ENCODE measurements at regions of chr3 and their contacts with region 1.

Region 1: GRCh38 chr3:156040041-156040440 is 80.3 kb upstream of the KCNAB1 start:
- DNase-seq: no peak
- ATAC-seq: no peak
- H3K4me3 ChIP-seq: no peak overlapping the region
- H3K27ac ChIP-seq: no peak overlapping the region
- H3K4me1 ChIP-seq: peaks cover 0 to 9% of the 10 kb centered on the region in 2 experiments; a peak in 1 of 5 replicates
- H3K27me3 ChIP-seq: peaks cover under 1 to 16% of the 10 kb centered on the region in 2 experiments; a peak in 4 of 5 replicates
- CTCF ChIP-seq: no peak
- EP300 ChIP-seq: no peak
- POLR2A ChIP-seq: no peak
- RAD21 ChIP-seq: no peak

Region 2: GRCh38 chr3:155995525-155996351 is 44.3 kb before region 1 on chr3:
- CTCF ChIA-PET with region 1: no interaction called
- POLR2A ChIA-PET with region 1: no interaction called
- in situ Hi-C with region 1: no loop called
- intact Hi-C with region 1: loop called (anchors 5 kb)
- DNase-seq: peak; percentile 22 to 61 (median 42)
- ATAC-seq: peak; percentile 95
- H3K4me3 ChIP-seq: no peak overlapping the region
- H3K27ac ChIP-seq: no peak overlapping the region
- H3K4me1 ChIP-seq: no peaks in the 10 kb centered on the region
- H3K27me3 ChIP-seq: peaks cover 7 to 13% of the 10 kb centered on the region in 2 experiments; a peak in 3 of 5 replicates
- CTCF ChIP-seq: peak; percentile 44 to 82 (median 69); a peak in 5 of 6 replicates
- EP300 ChIP-seq: no peak
- POLR2A ChIP-seq: no peak
- RAD21 ChIP-seq: peak; percentile 71 to 83

Region 3: GRCh38 chr3:156098437-156099035 is 58.5 kb after region 1 on chr3:
- CTCF ChIA-PET with region 1: no interaction called
- POLR2A ChIA-PET with region 1: no interaction called
- in situ Hi-C with region 1: no loop called
- intact Hi-C with region 1: no loop called
- DNase-seq: no peak
- ATAC-seq: no peak
- H3K4me3 ChIP-seq: no peak overlapping the region
- H3K27ac ChIP-seq: no peak overlapping the region
- H3K4me1 ChIP-seq: peaks cover 0 to 6% of the 10 kb centered on the region in 2 experiments; a peak in 1 of 5 replicates
- H3K27me3 ChIP-seq: peaks cover 0 to 6% of the 10 kb centered on the region in 2 experiments; a peak in 3 of 5 replicates
- CTCF ChIP-seq: no peak
- EP300 ChIP-seq: no peak
- POLR2A ChIP-seq: no peak
- RAD21 ChIP-seq: no peak

Region 4: DNA sequence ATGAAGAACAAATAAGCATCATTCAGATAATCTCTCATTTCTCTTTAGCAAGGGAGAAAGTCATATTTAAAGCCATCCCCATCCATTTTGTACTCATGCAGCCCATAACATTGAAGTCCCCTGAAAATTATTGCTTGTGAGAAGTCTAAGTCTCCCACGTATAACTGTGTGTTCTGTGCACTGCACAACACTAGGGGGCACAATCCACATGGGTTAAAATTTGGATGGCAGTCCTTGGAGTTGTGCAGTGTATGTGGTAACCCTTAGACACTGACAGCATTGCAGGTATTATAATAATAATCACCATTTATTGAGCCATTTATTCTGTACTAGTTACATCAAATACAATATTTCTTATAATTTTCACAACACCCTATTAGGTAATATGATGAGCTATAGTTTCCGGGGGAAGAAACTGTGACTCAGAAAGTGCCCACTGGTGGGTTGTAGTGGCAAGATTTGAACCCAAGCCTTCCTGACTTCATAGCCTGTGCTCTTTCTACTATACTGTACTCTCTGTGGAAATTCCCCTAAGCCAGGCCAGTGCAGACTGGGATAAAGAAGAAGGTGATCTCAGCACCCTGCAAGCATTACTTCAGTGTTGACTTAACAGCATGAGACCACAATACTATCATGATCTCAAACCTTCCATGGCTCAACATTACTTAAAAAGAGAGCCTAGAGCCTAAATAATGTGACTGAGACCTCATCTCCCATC is 96.0 kb after region 1 on chr3:
- CTCF ChIA-PET with region 1: no interaction called
- POLR2A ChIA-PET with region 1: no interaction called
- in situ Hi-C with region 1: no loop called
- intact Hi-C with region 1: loop called (anchors 5 kb)
- DNase-seq: peak in 3 of 4 experiments; percentile 9 to 19 (median 19)
- ATAC-seq: peak; percentile 74
- H3K4me3 ChIP-seq: no peak overlapping the region
- H3K27ac ChIP-seq: no peak overlapping the region
- H3K4me1 ChIP-seq: no peaks in the 10 kb centered on the region
- H3K27me3 ChIP-seq: peaks cover 0 to 5% of the 10 kb centered on the region in 2 experiments; a peak in 1 of 5 replicates
- CTCF ChIP-seq: peak; percentile 41 to 46 (median 42); a peak in 3 of 6 replicates
- EP300 ChIP-seq: no peak
- POLR2A ChIP-seq: no peak
- RAD21 ChIP-seq: peak in 1 of 2 experiments; percentile 41; a peak in 2 of 4 replicates

Region 5: GRCh38 chr3:156151824-156152428 is 111.9 kb after region 1 on chr3:
- CTCF ChIA-PET with region 1: interaction called, 3 read pairs
- POLR2A ChIA-PET with region 1: no interaction called
- in situ Hi-C with region 1: no loop called
- intact Hi-C with region 1: loop called (anchors 5 kb)
- DNase-seq: peak; percentile 35 to 69 (median 49)
- ATAC-seq: peak; percentile 91
- H3K4me3 ChIP-seq: no peak overlapping the region
- H3K27ac ChIP-seq: no peak overlapping the region
- H3K4me1 ChIP-seq: peaks cover 0 to 7% of the 10 kb centered on the region in 2 experiments; a peak in 2 of 5 replicates
- H3K27me3 ChIP-seq: peaks cover 2 to 4% of the 10 kb centered on the region in 2 experiments; a peak in 2 of 5 replicates
- CTCF ChIP-seq: peak; percentile 79 to 92 (median 91)
- EP300 ChIP-seq: no peak
- POLR2A ChIP-seq: no peak
- RAD21 ChIP-seq: peak; percentile 67 to 85